Upper lobe of right lung (tissue), 1 donor: ENCODE measurements at regions of chr18 and their contacts with region 1.

Region 1: DNA sequence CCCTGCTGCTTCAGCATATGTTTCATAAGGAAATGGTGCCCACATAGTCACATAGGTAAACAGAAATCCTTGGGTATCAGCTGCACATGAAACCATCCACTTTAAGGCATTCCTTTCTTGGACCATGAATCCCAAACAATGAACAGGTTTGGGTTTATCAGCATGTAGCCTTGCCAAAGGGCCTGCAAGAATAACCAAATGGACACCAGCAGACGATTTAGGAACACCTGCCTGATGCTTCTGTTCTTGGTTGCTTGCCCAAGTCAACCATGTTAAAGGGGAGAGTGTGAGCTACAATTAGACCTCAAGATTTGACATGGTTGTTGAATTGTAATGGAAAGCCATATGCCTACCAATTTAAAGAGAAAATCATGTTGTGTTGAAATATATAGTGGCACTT is 1342.7 kb upstream of the PIK3C3 start:
- DNase-seq: no peak
- ATAC-seq: no peak
- H3K4me3 ChIP-seq: no peak overlapping the region
- H3K27ac ChIP-seq: no peak overlapping the region
- H3K4me1 ChIP-seq: no peaks in the 10 kb centered on the region
- H3K27me3 ChIP-seq: no peaks in the 10 kb centered on the region
- CTCF ChIP-seq: no peak

Region 2: DNA sequence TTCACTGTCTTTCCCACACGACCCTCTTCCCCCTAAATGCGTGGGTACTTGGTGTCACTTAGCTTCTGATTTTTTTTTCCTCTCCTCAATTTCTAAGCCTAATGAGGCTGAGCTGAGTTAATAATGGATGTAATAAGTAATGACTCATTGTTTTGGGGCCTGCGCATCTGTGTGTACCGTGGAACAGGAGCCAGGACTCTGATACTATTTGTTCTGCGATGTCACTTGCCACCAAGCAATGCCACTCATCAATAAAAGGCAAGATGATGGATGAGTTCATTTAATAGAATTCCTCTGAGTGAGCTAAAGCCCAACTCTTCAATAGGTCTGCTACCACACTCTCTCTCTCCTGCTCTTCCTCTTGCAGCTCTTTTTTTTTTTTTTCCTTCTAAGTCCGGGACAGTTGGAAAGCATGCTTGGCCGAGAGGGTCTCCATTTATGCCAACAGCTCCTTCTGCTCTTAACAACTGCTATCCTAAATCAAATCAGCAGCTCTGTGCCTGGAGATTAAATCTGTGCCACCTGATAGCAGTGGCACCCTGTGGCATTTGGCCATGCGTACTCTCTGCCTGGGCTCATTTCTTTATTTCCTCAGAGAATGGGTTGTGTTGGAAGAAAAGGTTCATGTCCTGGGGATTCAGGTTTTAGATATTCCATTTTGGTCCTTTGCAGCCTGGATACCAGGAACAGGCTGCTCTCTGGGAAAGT is 58.5 kb after region 1 on chr18:
- intact Hi-C with region 1: loop called (anchors 5 kb)
- DNase-seq: no peak
- ATAC-seq: no peak
- H3K4me3 ChIP-seq: no peak overlapping the region
- H3K27ac ChIP-seq: no peak overlapping the region
- H3K4me1 ChIP-seq: no peaks in the 10 kb centered on the region
- H3K27me3 ChIP-seq: no peaks in the 10 kb centered on the region
- CTCF ChIP-seq: no peak